CD14-positive monocyte (primary cell): ENCODE measurements at regions of chr22 and their contacts with region 1.

Region 1: GRCh38 chr22:37745548-37746365 is 48.9 kb downstream of the TRIOBP start:
- DNase-seq: peak; percentile 77 to 84 (median 81)
- H3K4me3 ChIP-seq: peak overlapping the region; percentile 77 to 96 (median 95)
- H3K4me3 Mint-ChIP-seq: peak overlapping the region; percentile 85 to 95
- H3K27ac ChIP-seq: peak overlapping the region; percentile 37 to 84
- H3K27ac Mint-ChIP-seq: peak overlapping the region; percentile 63 to 94 (median 86)
- H3K4me1 ChIP-seq: peaks cover 60 to 73% of the 10 kb centered on the region in 2 donors
- H3K4me1 Mint-ChIP-seq: peaks cover 67% of the 10 kb centered on the region
- H3K27me3 ChIP-seq: no peaks in the 10 kb centered on the region
- H3K27me3 Mint-ChIP-seq: no peaks in the 10 kb centered on the region
- CTCF ChIP-seq: no peak

Region 2: GRCh38 chr22:37608477-37609239 is 137.1 kb before region 1 on chr22 and contains the start of gene GGA1:
- intact Hi-C with region 1: no loop called
- DNase-seq: peak; percentile 100
- H3K4me3 ChIP-seq: peak within 1 kb of the TSS; percentile 60 to 81 (median 68)
- H3K4me3 Mint-ChIP-seq: peak within 1 kb of the TSS; percentile 97
- H3K27ac ChIP-seq: peak within 1 kb of the TSS; percentile 91 to 93
- H3K27ac Mint-ChIP-seq: peak within 1 kb of the TSS; percentile 97 to 99 (median 98)
- H3K4me1 ChIP-seq: peaks cover 42 to 45% of the 10 kb centered on the region in 2 donors
- H3K4me1 Mint-ChIP-seq: peaks cover 53% of the 10 kb centered on the region
- H3K27me3 ChIP-seq: no peaks in the 10 kb centered on the region
- H3K27me3 Mint-ChIP-seq: peaks cover 7 to 16% (median 7%) of the 10 kb centered on the region in 3 donors
- CTCF ChIP-seq: no peak
- polyA plus RNA-seq, gene GGA1: 19.8 to 91.0 (median 24.8) TPM

Region 3: GRCh38 chr22:37696657-37697537 is 48.9 kb before region 1 on chr22 and contains the start of gene TRIOBP:
- intact Hi-C with region 1: loop called in 1 of 2 experiments (anchors 5 kb)
- DNase-seq: peak; percentile 92 to 97 (median 94)
- H3K4me3 ChIP-seq: peak within 1 kb of the TSS in 1 of 3 experiments; percentile 56
- H3K4me3 Mint-ChIP-seq: peak within 1 kb of the TSS; percentile 40 to 88
- H3K27ac ChIP-seq: no peak within 1 kb of the TSS
- H3K27ac Mint-ChIP-seq: peak within 1 kb of the TSS in 5 of 7 donors; percentile 46 to 77 (median 60)
- H3K4me1 ChIP-seq: peaks cover 32 to 37% of the 10 kb centered on the region in 2 donors
- H3K4me1 Mint-ChIP-seq: peaks cover 33% of the 10 kb centered on the region
- H3K27me3 ChIP-seq: no peaks in the 10 kb centered on the region
- H3K27me3 Mint-ChIP-seq: peaks cover 0 to 4% (median 2%) of the 10 kb centered on the region in 3 donors
- CTCF ChIP-seq: peak; percentile 43
- polyA plus RNA-seq, gene TRIOBP: 43.0 to 46.6 (median 44.7) TPM

Region 4: GRCh38 chr22:37768273-37768672 is 22.5 kb after region 1 on chr22:
- intact Hi-C with region 1: no loop called
- DNase-seq: no peak
- H3K4me3 ChIP-seq: no peak overlapping the region
- H3K4me3 Mint-ChIP-seq: no peak overlapping the region
- H3K27ac ChIP-seq: no peak overlapping the region
- H3K27ac Mint-ChIP-seq: no peak overlapping the region
- H3K4me1 ChIP-seq: no peaks in the 10 kb centered on the region
- H3K4me1 Mint-ChIP-seq: no peaks in the 10 kb centered on the region
- H3K27me3 ChIP-seq: no peaks in the 10 kb centered on the region
- H3K27me3 Mint-ChIP-seq: peaks cover 0 to 2% (median 0%) of the 10 kb centered on the region in 3 donors
- CTCF ChIP-seq: peak; percentile 26

Region 5: DNA sequence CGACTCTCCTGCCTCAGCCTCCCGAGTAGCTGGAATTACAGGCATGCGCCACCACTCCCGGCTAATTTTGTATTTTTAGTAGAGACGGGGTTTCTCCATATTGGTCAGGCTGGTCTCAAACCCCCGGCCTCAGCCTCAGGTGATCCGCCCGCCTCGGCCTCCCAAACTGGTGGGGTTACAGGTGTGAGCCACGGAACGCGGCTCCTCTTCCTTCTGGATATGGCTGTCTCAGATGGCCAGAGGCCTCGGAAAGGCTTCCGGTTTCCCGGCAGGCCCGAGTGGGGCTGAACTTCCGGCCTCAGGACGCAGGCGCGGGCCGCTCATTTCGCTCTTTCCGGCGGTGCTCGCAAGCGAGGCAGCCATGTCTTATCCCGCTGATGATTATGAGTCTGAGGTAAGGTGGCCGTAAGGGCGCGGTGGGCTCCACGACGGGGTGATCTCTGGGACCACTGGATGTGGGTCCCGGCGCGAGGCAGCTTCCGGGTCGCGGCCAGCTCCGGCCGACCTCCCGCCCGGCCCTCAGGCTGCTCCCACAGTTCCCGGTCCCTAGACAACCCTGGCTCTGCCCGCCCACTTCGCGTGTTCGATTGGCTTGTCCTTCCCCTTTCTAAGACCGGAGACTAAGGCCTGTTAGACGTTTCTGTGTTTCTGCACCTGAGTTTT is 103.5 kb after region 1 on chr22 and contains the start of gene EIF3L:
- intact Hi-C with region 1: loop called in 1 of 2 experiments (anchors 10 kb)
- DNase-seq: peak; percentile 80 to 88 (median 87)
- H3K4me3 ChIP-seq: peak within 1 kb of the TSS; percentile 54 to 95 (median 82)
- H3K4me3 Mint-ChIP-seq: peak within 1 kb of the TSS; percentile 91 to 95
- H3K27ac ChIP-seq: peak within 1 kb of the TSS; percentile 78 to 89
- H3K27ac Mint-ChIP-seq: peak within 1 kb of the TSS; percentile 94 to 98 (median 96)
- H3K4me1 ChIP-seq: peaks cover 17 to 19% of the 10 kb centered on the region in 2 donors
- H3K4me1 Mint-ChIP-seq: peaks cover 21% of the 10 kb centered on the region
- H3K27me3 ChIP-seq: no peaks in the 10 kb centered on the region
- H3K27me3 Mint-ChIP-seq: no peaks in the 10 kb centered on the region
- CTCF ChIP-seq: no peak
- polyA plus RNA-seq, gene EIF3L: 209 to 503 (median 246) TPM